ENCODE measurements at regions of chr2 and their contacts with region 1.

Region 1: GRCh38 chr2:61877571-61878245 is 10.7 kb downstream of the CCT4 start:
- DNase-seq: no peak
- ATAC-seq: no peak
- H3K4me3 ChIP-seq: no peak overlapping the region
- H3K27ac ChIP-seq: no peak overlapping the region
- H3K4me1 ChIP-seq: no peaks in the 10 kb centered on the region
- H3K27me3 ChIP-seq: no peaks in the 10 kb centered on the region
- CTCF ChIP-seq: no peak
- EP300 ChIP-seq: no peak
- POLR2A ChIP-seq: no peak
- RAD21 ChIP-seq: no peak

Region 2: GRCh38 chr2:61460163-61460562 is 417.5 kb before region 1 on chr2:
- CTCF ChIA-PET with region 1: no interaction called
- POLR2A ChIA-PET with region 1: no interaction called
- in situ Hi-C with region 1: no loop called
- intact Hi-C with region 1: no loop called
- DNase-seq: no peak
- ATAC-seq: no peak
- H3K4me3 ChIP-seq: no peak overlapping the region
- H3K27ac ChIP-seq: 0 out of 3 replicates have a peak overlapping the region, but pooled peaks have one; percentile 10
- H3K4me1 ChIP-seq: peaks cover 12 to 35% of the 10 kb centered on the region in 2 experiments; a peak in 4 of 5 replicates
- H3K27me3 ChIP-seq: no peaks in the 10 kb centered on the region
- CTCF ChIP-seq: no peak
- EP300 ChIP-seq: no peak
- POLR2A ChIP-seq: no peak
- RAD21 ChIP-seq: no peak

Region 3: DNA sequence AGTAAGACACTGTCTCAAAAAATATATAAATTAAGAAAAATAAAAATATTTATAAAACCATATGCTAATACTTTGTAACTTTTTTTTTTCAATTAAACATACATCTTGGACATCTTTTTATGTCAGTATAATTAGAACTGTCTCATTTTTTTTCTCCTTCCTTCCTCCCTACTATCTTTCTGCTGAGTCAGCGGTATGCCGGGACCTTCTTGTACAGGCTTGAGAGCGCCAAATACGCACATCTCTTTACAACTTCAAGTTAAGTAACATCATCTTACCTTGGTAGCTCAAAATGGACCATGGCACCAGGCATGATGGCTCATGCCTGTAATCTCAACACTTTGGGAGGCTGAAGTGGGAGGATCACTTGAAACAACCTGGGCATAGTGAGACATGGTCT is 177.2 kb before region 1 on chr2:
- CTCF ChIA-PET with region 1: no interaction called
- POLR2A ChIA-PET with region 1: no interaction called
- in situ Hi-C with region 1: no loop called
- intact Hi-C with region 1: no loop called
- DNase-seq: peak in 1 of 4 experiments; percentile 20
- ATAC-seq: no peak
- H3K4me3 ChIP-seq: no peak overlapping the region
- H3K27ac ChIP-seq: no peak overlapping the region
- H3K4me1 ChIP-seq: no peaks in the 10 kb centered on the region
- H3K27me3 ChIP-seq: no peaks in the 10 kb centered on the region
- CTCF ChIP-seq: no peak
- EP300 ChIP-seq: no peak
- POLR2A ChIP-seq: no peak
- RAD21 ChIP-seq: no peak

Region 4: GRCh38 chr2:61888267-61889055 is 10.8 kb after region 1 on chr2 and contains the start of gene CCT4:
- CTCF ChIA-PET with region 1: no interaction called
- POLR2A ChIA-PET with region 1: interaction called, 14 read pairs
- in situ Hi-C with region 1: no loop called
- intact Hi-C with region 1: no loop called
- DNase-seq: peak; percentile 73 to 92 (median 79)
- ATAC-seq: peak; percentile 77
- H3K4me3 ChIP-seq: peak within 1 kb of the TSS; percentile 78
- H3K27ac ChIP-seq: peak within 1 kb of the TSS; percentile 87
- H3K4me1 ChIP-seq: peaks cover 2 to 21% of the 10 kb centered on the region in 2 experiments; a peak in 4 of 5 replicates
- H3K27me3 ChIP-seq: no peaks in the 10 kb centered on the region
- CTCF ChIP-seq: no peak
- EP300 ChIP-seq: no peak; the same call in 1 of the 2 replicates
- POLR2A ChIP-seq: peak; percentile 98
- RAD21 ChIP-seq: no peak
- polyA plus RNA-seq, gene CCT4: 101 to 157 TPM